Activated CD8-positive, alpha-beta T cell treated with anti-CD3 and anti-CD28 coated beads for 36 hours (primary cell): ENCODE measurements at regions of chr20 and their contacts with region 1.

Region 1: DNA sequence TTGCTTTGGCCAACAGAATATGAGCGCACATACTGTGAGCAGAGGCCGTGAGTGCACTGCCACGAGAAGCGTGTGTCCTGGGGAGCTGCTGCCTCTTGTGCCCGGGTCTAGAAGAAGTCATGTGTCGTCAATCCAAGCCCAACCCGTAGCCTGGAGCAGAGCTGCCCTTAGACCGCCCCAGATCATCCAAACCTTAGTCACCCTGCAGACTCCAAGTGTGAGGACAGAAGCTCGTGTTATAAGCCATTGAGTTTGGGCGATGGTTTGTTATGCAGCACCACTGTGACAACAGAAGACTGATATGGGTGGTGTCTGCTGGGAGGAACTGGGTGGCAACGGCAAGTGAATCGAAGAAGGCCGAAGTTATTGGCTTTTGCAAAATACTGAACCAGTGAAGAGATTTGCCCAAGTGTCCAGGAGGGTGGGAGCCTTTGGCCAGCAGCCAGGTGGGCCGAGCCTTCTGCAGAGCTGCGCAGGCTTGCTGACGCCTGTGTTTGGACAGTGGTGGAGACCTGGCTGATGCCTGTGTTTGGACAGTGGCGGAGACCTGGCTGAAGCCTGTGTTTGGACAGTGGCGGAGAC is 101.3 kb upstream of the SULF2 start:
- DNase-seq: no peak
- ATAC-seq: no peak
- H3K4me3 Mint-ChIP-seq: no peak overlapping the region
- H3K27ac Mint-ChIP-seq: no peak overlapping the region
- H3K4me1 Mint-ChIP-seq: no peaks in the 10 kb centered on the region
- H3K27me3 Mint-ChIP-seq: no peaks in the 10 kb centered on the region
- CTCF ChIP-seq: no peak

Region 2: GRCh38 chr20:47839200-47839599 is 47.4 kb before region 1 on chr20:
- CTCF ChIA-PET with region 1: no interaction called
- POLR2A ChIA-PET with region 1: no interaction called
- intact Hi-C with region 1: loop called (anchors 10 kb)
- DNase-seq: no peak
- ATAC-seq: no peak
- H3K4me3 Mint-ChIP-seq: no peak overlapping the region
- H3K27ac Mint-ChIP-seq: no peak overlapping the region
- H3K4me1 Mint-ChIP-seq: no peaks in the 10 kb centered on the region
- H3K27me3 Mint-ChIP-seq: no peaks in the 10 kb centered on the region
- CTCF ChIP-seq: no peak

Region 3: GRCh38 chr20:47905612-47906347 is 19.2 kb after region 1 on chr20:
- CTCF ChIA-PET with region 1: no interaction called
- POLR2A ChIA-PET with region 1: no interaction called
- intact Hi-C with region 1: no loop called
- DNase-seq: no peak
- ATAC-seq: no peak
- H3K4me3 Mint-ChIP-seq: no peak overlapping the region
- H3K27ac Mint-ChIP-seq: no peak overlapping the region
- H3K4me1 Mint-ChIP-seq: no peaks in the 10 kb centered on the region
- H3K27me3 Mint-ChIP-seq: no peaks in the 10 kb centered on the region
- CTCF ChIP-seq: no peak

Region 4: GRCh38 chr20:48523212-48523941 is 636.8 kb after region 1 on chr20:
- CTCF ChIA-PET with region 1: no interaction called
- POLR2A ChIA-PET with region 1: no interaction called
- intact Hi-C with region 1: loop called (anchors 10 kb)
- DNase-seq: no peak
- ATAC-seq: no peak
- H3K4me3 Mint-ChIP-seq: no peak overlapping the region
- H3K27ac Mint-ChIP-seq: no peak overlapping the region
- H3K4me1 Mint-ChIP-seq: no peaks in the 10 kb centered on the region
- H3K27me3 Mint-ChIP-seq: peaks cover 17% of the 10 kb centered on the region
- CTCF ChIP-seq: no peak